ENCODE measurements at regions of chr12 and their contacts with region 1.

Region 1: DNA sequence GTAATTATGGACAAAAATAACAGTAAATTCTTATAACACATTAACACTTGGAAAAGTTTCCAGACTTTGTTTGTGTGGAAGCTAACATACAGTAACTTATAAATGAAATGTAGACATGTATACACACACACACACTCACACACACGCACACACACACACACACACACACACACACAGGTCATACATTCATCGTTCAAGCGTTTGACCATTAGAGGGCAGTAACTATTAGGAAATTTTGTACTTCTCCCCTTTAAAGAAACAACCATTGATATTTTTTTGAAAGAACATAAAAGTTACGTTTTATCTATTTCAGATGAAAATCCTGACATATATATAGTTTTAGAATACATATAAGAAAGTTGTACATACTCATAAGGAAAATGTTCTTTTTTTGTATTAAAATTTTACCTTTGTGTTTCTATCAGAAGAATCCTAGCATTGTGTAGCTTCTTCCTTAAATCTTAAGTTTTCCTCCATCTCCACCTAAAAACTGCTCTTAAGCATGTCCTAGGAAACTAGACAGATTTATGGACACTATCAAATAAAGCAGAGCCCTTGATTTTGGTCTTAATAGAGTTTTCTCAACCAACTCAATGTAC is 29.0 kb downstream of the PTPRQ start:
- DNase-seq: peak; percentile 67
- ATAC-seq: peak; percentile 67
- H3K4me3 ChIP-seq: no peak overlapping the region
- H3K27ac ChIP-seq: no peak overlapping the region
- H3K4me1 ChIP-seq: no peaks in the 10 kb centered on the region
- H3K27me3 ChIP-seq: no peaks in the 10 kb centered on the region
- CTCF ChIP-seq: peak; percentile 81

Region 2: GRCh38 chr12:79883216-79883615 is 589.8 kb before region 1 on chr12:
- CTCF ChIA-PET with region 1: no interaction called
- POLR2A ChIA-PET with region 1: no interaction called
- intact Hi-C with region 1: no loop called
- DNase-seq: peak; percentile 64
- ATAC-seq: peak; percentile 81
- H3K4me3 ChIP-seq: no peak overlapping the region
- H3K27ac ChIP-seq: no peak overlapping the region
- H3K4me1 ChIP-seq: peaks cover 12% of the 10 kb centered on the region
- H3K27me3 ChIP-seq: no peaks in the 10 kb centered on the region
- CTCF ChIP-seq: no peak

Region 3: GRCh38 chr12:80313209-80313608 is 159.8 kb before region 1 on chr12:
- CTCF ChIA-PET with region 1: no interaction called
- POLR2A ChIA-PET with region 1: no interaction called
- intact Hi-C with region 1: loop called (anchors 5 kb)
- DNase-seq: peak; percentile 49
- ATAC-seq: 0 out of 2 replicates have a peak, but pooled peaks have one; percentile 33
- H3K4me3 ChIP-seq: no peak overlapping the region
- H3K27ac ChIP-seq: no peak overlapping the region
- H3K4me1 ChIP-seq: no peaks in the 10 kb centered on the region
- H3K27me3 ChIP-seq: no peaks in the 10 kb centered on the region
- CTCF ChIP-seq: peak; percentile 55

Region 4: DNA sequence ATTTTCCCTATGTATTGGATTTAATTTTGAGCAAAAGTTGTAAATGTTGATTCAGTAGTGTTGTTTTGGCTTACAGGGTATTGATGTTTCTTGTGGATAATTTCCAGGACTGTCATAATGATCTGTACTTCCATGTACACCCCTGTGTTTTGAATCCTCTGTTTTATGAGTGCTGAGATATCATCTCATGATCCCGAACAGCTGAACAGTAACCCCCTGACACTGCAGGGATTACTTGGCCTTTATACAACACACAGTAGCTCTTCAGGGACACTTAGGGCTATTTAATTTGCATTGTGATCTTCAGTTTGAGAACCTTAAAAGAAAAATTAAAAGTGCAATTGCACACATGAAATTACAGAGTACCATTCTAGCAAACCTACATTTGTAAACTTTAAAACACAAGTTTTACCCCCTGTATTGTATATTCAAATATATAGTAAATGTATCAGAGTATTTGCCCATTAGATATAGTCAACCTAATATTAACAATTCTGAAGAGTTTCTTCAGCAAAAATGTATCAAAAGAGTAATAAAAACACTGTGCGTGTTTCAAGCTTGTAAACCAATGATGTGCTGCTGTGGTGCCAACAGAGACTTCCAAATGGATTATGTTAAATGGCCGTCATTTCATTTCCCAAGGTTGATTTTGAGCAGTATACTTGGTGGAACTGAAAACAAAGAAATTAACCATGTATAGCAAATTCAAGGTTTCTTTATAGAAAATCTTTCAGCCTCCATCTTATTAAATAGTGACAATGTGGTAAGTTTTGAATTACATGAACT is 206.5 kb after region 1 on chr12:
- CTCF ChIA-PET with region 1: no interaction called
- POLR2A ChIA-PET with region 1: no interaction called
- intact Hi-C with region 1: loop called (anchors 2 kb)
- DNase-seq: no peak
- ATAC-seq: no peak
- H3K4me3 ChIP-seq: no peak overlapping the region
- H3K27ac ChIP-seq: no peak overlapping the region
- H3K4me1 ChIP-seq: no peaks in the 10 kb centered on the region
- H3K27me3 ChIP-seq: 0 out of 2 replicates have a peak, but pooled peaks cover 11% of the 10 kb centered on the region
- CTCF ChIP-seq: no peak

Region 5: GRCh38 chr12:80763874-80764273 is 290.9 kb after region 1 on chr12:
- CTCF ChIA-PET with region 1: no interaction called
- POLR2A ChIA-PET with region 1: no interaction called
- intact Hi-C with region 1: loop called (anchors 2 kb)
- DNase-seq: peak; percentile 60
- ATAC-seq: no peak
- H3K4me3 ChIP-seq: no peak overlapping the region
- H3K27ac ChIP-seq: no peak overlapping the region
- H3K4me1 ChIP-seq: no peaks in the 10 kb centered on the region
- H3K27me3 ChIP-seq: peaks cover 28% of the 10 kb centered on the region
- CTCF ChIP-seq: peak; percentile 78

Region 6: GRCh38 chr12:80892597-80893445 is 419.8 kb after region 1 on chr12:
- CTCF ChIA-PET with region 1: no interaction called
- POLR2A ChIA-PET with region 1: no interaction called
- intact Hi-C with region 1: no loop called
- DNase-seq: no peak
- ATAC-seq: no peak
- H3K4me3 ChIP-seq: no peak overlapping the region
- H3K27ac ChIP-seq: no peak overlapping the region
- H3K4me1 ChIP-seq: no peaks in the 10 kb centered on the region
- H3K27me3 ChIP-seq: peaks cover 13% of the 10 kb centered on the region; the same call in 1 of the 2 replicates
- CTCF ChIP-seq: no peak

Measured in PC-3 (cell line).